Activated B cell treated with CpG ODN at 0.5 μM for 24 hours (primary cell): ENCODE measurements at regions of chr1 and their contacts with region 1.

Region 1: DNA sequence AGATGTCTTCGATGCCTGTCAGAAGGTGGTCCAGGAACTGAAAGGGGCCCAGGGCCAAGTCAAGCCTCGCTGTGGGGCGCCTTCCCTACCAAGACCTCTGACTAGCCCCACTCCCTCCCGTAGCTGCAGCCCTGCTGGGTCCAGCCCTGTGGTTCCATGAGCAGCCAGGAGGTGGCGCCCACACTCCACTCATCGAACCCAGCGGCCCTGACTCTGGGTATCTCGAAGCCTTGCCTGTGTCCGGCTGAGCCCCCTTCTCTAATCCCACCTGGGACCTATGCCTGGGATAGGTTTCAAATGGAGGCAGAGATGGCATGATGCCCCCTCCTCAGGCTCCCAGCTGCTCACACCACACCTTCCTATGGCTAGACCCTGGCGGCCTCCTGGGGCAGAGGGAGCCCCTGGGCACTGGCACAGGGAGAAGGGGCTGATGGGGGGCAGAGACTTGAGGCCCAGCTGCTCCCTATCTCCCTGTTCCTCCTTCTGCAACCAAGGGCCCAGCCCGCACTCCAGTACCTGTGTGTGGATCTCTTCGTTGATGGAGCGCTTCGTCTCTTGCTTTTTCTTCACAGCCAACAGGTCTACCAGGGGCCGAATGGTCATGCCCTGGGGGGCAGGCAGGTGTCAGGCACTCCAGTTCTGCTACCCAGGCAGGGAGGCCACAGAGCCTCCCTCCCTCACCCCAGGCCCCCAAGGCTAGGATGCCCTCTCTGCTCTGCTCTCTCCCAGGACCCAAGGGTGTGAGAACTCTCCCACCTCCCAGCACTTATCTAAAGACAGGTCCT is 52.0 kb downstream of the SLC9A1 start:
- DNase-seq: peak; percentile 85
- ATAC-seq: peak; percentile 33
- H3K4me3 Mint-ChIP-seq: no peak overlapping the region
- H3K27ac Mint-ChIP-seq: no peak overlapping the region
- H3K4me1 Mint-ChIP-seq: peaks cover 41% of the 10 kb centered on the region
- H3K27me3 Mint-ChIP-seq: no peaks in the 10 kb centered on the region
- CTCF ChIP-seq: no peak

Region 2: DNA sequence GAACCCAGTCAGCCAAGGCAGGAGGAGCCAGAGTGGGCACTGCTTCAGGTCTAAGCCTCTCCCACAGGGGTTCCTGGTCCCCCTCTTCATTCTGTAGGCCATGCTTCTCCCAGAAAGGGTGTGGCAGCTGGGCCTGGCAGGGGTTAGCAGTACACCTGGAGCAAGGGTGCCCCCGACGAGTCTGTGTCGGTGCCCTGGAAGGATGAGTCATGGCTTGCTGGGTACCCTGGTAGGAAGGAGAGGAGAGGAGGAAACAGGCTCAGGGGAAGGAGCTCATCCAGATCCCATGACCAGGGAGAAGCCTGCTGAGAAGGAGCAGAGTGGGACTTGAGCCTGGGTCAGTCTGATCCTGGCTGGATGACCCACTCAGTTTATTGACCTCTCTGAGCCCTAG is 153.0 kb before region 1 on chr1:
- CTCF ChIA-PET with region 1: no interaction called
- POLR2A ChIA-PET with region 1: no interaction called
- intact Hi-C with region 1: no loop called
- DNase-seq: no peak
- ATAC-seq: no peak
- H3K4me3 Mint-ChIP-seq: no peak overlapping the region
- H3K27ac Mint-ChIP-seq: no peak overlapping the region
- H3K4me1 Mint-ChIP-seq: no peaks in the 10 kb centered on the region
- H3K27me3 Mint-ChIP-seq: peaks cover 2% of the 10 kb centered on the region
- CTCF ChIP-seq: no peak

Region 3: DNA sequence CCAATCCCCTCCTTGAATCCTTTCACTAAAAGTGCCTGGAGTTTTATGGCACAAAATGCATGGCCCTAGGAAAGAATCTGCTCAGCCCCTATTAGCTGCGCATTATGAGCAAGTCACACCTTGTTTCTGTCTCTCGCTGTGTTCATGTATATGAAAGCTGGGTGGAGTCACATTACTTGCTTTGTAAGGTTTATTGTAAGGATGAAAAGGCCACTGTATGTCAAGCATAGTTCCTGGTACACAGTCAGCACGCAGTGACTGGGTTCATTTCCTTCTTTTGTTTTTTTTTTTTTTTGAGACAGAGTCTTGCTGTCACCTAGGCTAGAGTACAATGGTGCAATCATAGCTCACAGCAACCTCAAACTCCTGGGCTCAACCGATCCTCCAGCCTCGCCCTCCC is 58.7 kb after region 1 on chr1:
- CTCF ChIA-PET with region 1: no interaction called
- POLR2A ChIA-PET with region 1: interaction called, 8 read pairs
- intact Hi-C with region 1: loop called (anchors 1 kb)
- DNase-seq: no peak
- ATAC-seq: peak; percentile 99
- H3K4me3 Mint-ChIP-seq: peak overlapping the region; percentile 74
- H3K27ac Mint-ChIP-seq: peak overlapping the region; percentile 91
- H3K4me1 Mint-ChIP-seq: peaks cover 20% of the 10 kb centered on the region
- H3K27me3 Mint-ChIP-seq: no peaks in the 10 kb centered on the region
- CTCF ChIP-seq: no peak

Region 4: DNA sequence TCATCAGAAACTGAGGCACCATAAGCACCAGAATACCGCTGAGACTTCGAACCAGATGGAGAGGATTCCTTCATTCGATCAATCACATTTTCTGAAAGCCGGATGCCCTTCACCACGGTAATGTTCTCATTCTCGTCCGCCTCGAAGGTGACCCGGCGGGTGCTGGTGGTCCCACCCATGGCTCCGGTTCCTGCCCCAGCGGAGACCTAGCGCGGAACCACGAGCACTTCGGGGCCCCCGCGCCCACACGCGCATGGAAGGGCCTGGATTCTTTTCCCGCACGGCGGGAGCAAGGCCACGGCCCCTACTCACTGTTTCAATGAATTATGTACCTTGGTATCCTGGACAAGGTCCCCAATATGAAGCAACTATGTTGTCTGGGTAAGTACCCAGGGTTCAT is 98.4 kb after region 1 on chr1:
- CTCF ChIA-PET with region 1: interaction called, 30 read pairs
- POLR2A ChIA-PET with region 1: interaction called, 5 read pairs
- intact Hi-C with region 1: loop called (anchors 1 kb)
- DNase-seq: no peak
- ATAC-seq: no peak
- H3K4me3 Mint-ChIP-seq: no peak overlapping the region
- H3K27ac Mint-ChIP-seq: no peak overlapping the region
- H3K4me1 Mint-ChIP-seq: peaks cover 6% of the 10 kb centered on the region
- H3K27me3 Mint-ChIP-seq: no peaks in the 10 kb centered on the region
- CTCF ChIP-seq: no peak

Region 5: DNA sequence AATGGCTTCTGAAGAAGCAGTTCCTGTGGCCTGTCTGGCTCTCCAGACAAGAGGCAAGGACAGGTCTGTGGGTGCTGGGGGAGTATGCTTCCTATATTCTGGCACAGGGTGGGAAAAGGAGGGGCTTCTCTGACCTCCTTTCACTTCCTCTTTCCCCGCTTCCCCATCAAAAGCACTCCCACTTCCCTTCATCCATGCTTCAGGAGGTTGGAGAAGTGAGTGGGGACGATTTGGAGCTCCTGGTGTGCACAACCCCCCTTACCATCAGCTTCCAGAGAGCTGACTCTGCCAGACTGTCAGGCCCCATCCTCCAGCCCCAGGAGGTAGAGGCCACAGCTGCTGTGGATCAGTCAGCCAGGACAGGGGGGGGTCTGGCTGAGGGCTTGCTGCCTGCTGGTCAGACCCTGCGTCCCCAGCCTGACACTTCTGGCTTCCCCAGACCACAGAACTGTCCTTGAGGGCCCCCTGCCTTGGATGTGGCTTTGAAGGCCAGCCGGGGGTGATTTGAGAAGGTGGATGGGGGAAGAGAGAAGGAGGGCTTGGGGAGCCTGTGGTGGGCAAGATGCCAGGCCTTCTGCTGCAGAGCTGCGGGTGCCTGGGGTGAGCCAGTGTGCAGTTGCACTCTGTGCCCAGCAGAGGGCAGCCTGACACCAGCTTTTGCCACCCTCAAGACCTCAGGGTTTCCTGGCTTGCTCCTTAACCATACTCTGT is 197.6 kb after region 1 on chr1:
- CTCF ChIA-PET with region 1: interaction called, 12 read pairs
- POLR2A ChIA-PET with region 1: no interaction called
- intact Hi-C with region 1: no loop called
- DNase-seq: peak; percentile 72
- ATAC-seq: peak; percentile 90
- H3K4me3 Mint-ChIP-seq: no peak overlapping the region
- H3K27ac Mint-ChIP-seq: no peak overlapping the region
- H3K4me1 Mint-ChIP-seq: peaks cover 3% of the 10 kb centered on the region
- H3K27me3 Mint-ChIP-seq: no peaks in the 10 kb centered on the region
- CTCF ChIP-seq: peak; percentile 99